Gastrocnemius medialis (tissue), 4 donors: ENCODE measurements at regions of chr1 and their contacts with region 1.

Region 1: DNA sequence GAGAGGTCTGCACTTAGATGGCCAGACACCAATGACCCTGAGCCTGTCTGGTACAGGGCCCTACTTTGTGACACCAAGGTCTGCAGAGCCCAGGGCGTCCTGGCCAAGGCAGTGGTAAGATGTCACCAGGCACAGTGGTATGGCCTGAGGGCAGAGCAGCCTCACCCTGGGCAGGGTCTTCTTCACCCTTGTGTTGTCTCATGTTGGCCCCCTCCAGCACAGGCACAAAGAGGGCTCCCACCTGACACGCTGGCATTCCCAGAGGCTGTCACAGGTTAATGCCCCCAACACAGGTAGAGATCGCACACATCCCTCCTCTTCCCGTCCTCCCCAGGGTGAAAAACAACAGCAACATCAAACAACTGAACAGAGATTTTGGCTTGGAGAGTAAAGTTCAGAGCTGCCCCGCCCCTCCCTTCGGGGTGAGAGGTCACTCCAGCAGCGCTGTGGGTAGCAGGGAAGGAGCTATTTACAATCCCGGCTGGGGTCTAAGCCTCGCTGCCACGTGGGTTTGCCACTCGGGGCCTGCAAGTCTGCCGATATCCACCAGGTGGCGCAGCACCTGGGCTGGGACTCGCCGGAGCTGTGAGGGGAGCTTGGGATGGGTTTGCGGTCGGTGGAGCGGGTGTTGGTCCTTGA is 12.6 kb downstream of the EFNA3 start:
- DNase-seq: peak; percentile 44 to 59
- ATAC-seq: peak; percentile 44 to 81
- H3K4me3 ChIP-seq: no peak overlapping the region
- H3K27ac ChIP-seq: no peak overlapping the region
- H3K4me1 ChIP-seq: peaks cover 13% of the 10 kb centered on the region in 2 donors
- H3K27me3 ChIP-seq: no peaks in the 10 kb centered on the region
- CTCF ChIP-seq: peak; percentile 86 to 99 (median 97)
- POLR2A ChIP-seq: no peak

Region 2: DNA sequence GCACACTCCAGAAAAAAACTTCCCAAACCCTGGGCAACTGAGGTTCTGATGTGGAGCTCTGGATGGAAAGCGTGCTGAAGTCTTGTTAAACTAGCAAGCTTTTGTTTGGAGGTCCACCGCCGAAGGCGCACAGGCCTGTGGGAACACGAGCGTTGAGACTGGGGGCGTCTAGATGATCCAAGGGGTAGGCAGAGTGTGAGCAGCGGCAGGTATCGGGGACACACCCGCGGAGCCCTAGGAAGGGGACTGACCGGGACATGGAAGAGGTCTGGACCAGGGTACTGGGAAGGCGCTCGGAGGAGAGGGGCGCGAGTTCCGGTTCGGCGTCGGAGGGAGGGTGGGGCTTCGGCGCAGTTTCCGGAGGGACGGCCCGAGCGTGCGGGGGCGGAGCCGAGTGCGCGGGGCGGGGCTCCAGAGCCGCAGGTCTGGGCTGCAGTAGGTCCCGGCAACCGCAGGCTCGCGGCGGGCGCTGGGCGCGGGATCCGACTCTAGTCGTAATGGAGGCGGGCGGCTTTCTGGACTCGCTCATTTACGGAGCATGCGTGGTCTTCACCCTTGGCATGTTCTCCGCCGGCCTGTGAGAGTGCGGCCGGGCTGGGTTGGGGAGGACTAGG is 44.3 kb after region 1 on chr1 and contains the start of gene SLC50A1:
- in situ Hi-C with region 1: no loop called
- intact Hi-C with region 1: loop called (anchors 2 kb)
- DNase-seq: peak; percentile 87 to 93
- ATAC-seq: peak; percentile 69 to 78
- H3K4me3 ChIP-seq: peak within 1 kb of the TSS; percentile 82 to 93 (median 87)
- H3K27ac ChIP-seq: peak within 1 kb of the TSS; percentile 96 to 100 (median 98)
- H3K4me1 ChIP-seq: peaks cover 55 to 61% of the 10 kb centered on the region in 2 donors
- H3K27me3 ChIP-seq: no peaks in the 10 kb centered on the region
- CTCF ChIP-seq: peak; percentile 43 to 64 (median 59)
- POLR2A ChIP-seq: peak; percentile 90 to 92
- total RNA-seq, gene SLC50A1: 3.5 to 11.4 (median 8.2) TPM

Region 3: GRCh38 chr1:155167166-155168104 is 76.2 kb after region 1 on chr1:
- in situ Hi-C with region 1: loop called (anchors 5 kb)
- intact Hi-C with region 1: loop called (anchors 1 kb)
- DNase-seq: peak; percentile 71 to 75
- ATAC-seq: peak; percentile 75 to 81
- H3K4me3 ChIP-seq: peak overlapping the region in 3 of 4 donors; percentile 12 to 31 (median 30)
- H3K27ac ChIP-seq: peak overlapping the region; percentile 53 to 74 (median 70)
- H3K4me1 ChIP-seq: peaks cover 20 to 21% of the 10 kb centered on the region in 2 donors
- H3K27me3 ChIP-seq: no peaks in the 10 kb centered on the region
- CTCF ChIP-seq: peak; percentile 85 to 93 (median 89)
- POLR2A ChIP-seq: no peak

Region 4: DNA sequence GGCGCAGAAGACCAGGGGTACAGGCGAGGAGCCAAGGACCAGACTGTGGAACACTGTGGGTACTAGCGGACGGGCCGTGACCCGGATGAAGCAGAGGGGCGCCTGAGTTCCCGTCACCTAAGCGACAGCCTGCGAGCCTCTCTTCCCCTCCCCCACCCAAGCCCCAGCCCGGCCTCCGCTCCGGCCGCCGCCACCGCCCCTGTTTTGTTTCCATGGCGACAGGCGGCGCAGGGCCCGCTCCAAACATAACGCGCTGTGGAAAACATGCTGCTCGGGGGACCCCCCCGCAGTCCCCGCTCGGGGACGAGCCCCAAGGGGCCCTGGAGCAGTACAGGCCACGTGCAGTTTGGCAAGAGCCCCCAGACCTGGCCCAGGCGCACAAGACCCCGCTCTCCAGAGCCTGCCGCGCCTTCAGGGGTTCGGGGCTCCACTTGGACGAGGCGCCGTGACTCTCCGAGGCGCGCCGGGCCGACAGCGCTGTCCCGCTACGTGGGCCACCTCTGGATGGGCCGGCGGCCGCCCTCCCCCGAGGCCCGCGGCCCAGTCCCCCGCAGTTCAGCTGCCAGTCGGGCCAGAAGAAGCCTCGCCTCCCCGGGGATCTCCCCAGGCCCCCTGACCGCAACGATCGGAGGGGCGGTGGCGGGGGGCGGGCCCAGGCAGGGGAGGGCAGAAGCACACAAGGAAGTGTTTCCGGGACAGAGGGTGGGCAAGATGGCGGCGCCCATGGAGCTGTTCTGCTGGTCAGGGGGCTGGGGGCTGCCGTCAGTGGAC is 117.5 kb after region 1 on chr1 and contains the start of gene MTX1:
- in situ Hi-C with region 1: no loop called
- intact Hi-C with region 1: no loop called
- DNase-seq: peak; percentile 78 to 79
- ATAC-seq: peak; percentile 82 to 84
- H3K4me3 ChIP-seq: peak within 1 kb of the TSS; percentile 88 to 95 (median 90)
- H3K27ac ChIP-seq: peak within 1 kb of the TSS; percentile 93 to 99 (median 96)
- H3K4me1 ChIP-seq: peaks cover 16 to 28% of the 10 kb centered on the region in 2 donors
- H3K27me3 ChIP-seq: no peaks in the 10 kb centered on the region
- CTCF ChIP-seq: peak in 1 of 5 experiments; percentile 4
- POLR2A ChIP-seq: peak; percentile 42 to 67
- total RNA-seq, gene MTX1: 14.4 to 26.9 (median 24.6) TPM